Activated CD4-positive, alpha-beta T cell treated with anti-CD3 and anti-CD28 coated beads, Interleukin-2, amount 10 ng/mL, durations not matched to agents 24 days and 14 days (primary cell): ENCODE measurements at regions of chr14 and their contacts with region 1.

Region 1: DNA sequence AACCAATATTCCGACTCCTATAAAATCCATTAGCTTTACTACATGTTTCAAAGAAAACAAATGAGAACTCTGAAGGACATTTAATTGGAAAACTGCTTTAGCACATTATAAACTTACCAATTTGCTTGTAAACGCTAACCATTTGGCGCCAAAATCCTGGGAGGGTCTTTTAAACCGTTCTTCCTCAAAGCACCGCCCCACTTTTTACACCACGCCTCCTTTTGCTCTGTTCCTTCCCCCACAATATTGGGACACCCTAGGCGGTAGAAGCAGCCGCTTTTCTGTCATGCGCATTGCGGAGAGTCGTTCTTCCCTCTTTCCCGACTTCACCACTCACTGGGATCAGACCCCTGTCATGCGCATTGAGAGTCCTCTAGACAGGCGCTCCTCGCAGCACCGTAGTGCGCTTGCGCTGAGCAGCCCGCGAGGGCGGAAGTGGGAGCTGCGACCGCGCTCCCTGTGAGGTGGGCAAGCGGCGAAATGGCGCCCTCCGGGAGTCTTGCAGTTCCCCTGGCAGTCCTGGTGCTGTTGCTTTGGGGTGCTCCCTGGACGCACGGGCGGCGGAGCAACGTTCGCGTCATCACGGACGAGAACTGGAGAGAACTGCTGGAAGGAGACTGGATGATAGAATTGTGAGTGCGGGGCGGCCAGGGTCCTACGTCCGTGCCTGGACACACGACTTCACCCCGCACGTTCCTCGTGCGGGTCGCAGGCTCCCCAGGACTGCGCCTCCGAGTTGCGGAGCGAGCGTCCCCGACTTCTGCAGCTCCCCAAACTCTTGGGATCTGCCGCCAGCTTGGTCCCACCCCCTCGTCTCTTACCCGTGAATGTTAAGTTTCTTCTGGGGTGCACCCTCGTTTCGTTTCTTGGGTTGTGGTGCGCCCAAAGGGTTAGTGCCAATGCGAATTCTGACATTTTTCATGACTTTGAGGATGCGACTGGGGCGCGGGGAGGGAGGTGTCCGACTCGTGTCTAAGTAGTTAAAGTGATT is at the start of gene TMX1:
- DNase-seq: peak; percentile 97
- H3K4me3 Mint-ChIP-seq: no peak within 1 kb of the TSS
- H3K27ac Mint-ChIP-seq: no peak within 1 kb of the TSS
- H3K4me1 Mint-ChIP-seq: peaks cover 32% of the 10 kb centered on the region
- H3K27me3 Mint-ChIP-seq: no peaks in the 10 kb centered on the region
- total RNA-seq, gene TMX1: 53.1 and 53.6 TPM in 2 replicates

Region 2: DNA sequence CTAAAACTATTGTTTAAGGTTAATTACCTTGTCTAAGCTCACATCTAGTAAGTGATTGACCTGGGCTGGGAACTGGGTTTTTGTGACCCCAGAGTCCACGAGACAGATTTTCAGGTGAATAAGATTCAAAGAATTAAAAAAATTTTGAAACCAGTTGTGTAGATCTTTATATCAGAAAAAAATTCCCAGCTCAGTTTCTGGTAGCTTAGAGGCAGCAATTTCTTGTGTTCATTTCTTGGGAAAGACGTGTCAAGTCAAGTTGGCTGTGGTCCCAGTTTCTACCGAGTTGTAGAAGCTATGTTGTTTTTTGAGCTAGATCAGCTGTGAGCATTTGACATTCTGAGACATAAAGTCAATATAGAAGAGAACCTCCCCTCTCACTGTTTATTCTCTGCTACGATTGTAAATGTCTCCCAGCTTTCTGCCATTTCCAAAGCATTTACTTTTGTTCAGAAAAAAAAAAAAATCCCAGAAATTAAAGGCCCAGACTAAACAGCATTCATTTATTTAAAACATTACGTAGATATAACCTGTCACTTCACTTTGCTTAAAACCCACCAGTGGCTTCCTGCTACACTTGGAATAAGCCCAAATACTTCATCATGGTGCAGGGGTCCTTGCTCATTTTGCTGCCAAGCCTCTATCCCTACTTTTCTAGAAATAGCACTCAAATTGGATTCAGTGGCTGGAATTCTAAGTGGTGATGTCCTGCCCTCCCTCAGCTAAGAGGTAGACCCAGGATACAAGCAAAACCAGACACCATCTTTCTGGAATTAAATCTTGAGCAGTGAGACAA is 275.3 kb before region 1 on chr14:
- intact Hi-C with region 1: no loop called
- DNase-seq: no peak
- H3K4me3 Mint-ChIP-seq: no peak overlapping the region
- H3K27ac Mint-ChIP-seq: no peak overlapping the region
- H3K4me1 Mint-ChIP-seq: no peaks in the 10 kb centered on the region
- H3K27me3 Mint-ChIP-seq: peaks cover 14% of the 10 kb centered on the region

Region 3: GRCh38 chr14:51053157-51053556 is 187.0 kb before region 1 on chr14:
- intact Hi-C with region 1: no loop called
- DNase-seq: peak; percentile 4
- H3K4me3 Mint-ChIP-seq: no peak overlapping the region
- H3K27ac Mint-ChIP-seq: no peak overlapping the region
- H3K4me1 Mint-ChIP-seq: no peaks in the 10 kb centered on the region
- H3K27me3 Mint-ChIP-seq: no peaks in the 10 kb centered on the region

Region 4: GRCh38 chr14:51094901-51095853 is 144.9 kb before region 1 on chr14 and contains the start of gene TRIM9:
- intact Hi-C with region 1: loop called (anchors 1 kb)
- DNase-seq: peak; percentile 97
- H3K4me3 Mint-ChIP-seq: peak within 1 kb of the TSS; percentile 91
- H3K27ac Mint-ChIP-seq: peak within 1 kb of the TSS; percentile 51
- H3K4me1 Mint-ChIP-seq: peaks cover 15% of the 10 kb centered on the region
- H3K27me3 Mint-ChIP-seq: peaks cover 55% of the 10 kb centered on the region
- total RNA-seq, gene TRIM9: 0.47 and 0.52 TPM in 2 replicates

Region 5: GRCh38 chr14:51260225-51260624 is 20.1 kb after region 1 on chr14:
- intact Hi-C with region 1: loop called (anchors 1 kb)
- DNase-seq: no peak
- H3K4me3 Mint-ChIP-seq: peak overlapping the region; percentile 5
- H3K27ac Mint-ChIP-seq: peak overlapping the region; percentile 83
- H3K4me1 Mint-ChIP-seq: peaks cover 11% of the 10 kb centered on the region
- H3K27me3 Mint-ChIP-seq: no peaks in the 10 kb centered on the region

Region 6: DNA sequence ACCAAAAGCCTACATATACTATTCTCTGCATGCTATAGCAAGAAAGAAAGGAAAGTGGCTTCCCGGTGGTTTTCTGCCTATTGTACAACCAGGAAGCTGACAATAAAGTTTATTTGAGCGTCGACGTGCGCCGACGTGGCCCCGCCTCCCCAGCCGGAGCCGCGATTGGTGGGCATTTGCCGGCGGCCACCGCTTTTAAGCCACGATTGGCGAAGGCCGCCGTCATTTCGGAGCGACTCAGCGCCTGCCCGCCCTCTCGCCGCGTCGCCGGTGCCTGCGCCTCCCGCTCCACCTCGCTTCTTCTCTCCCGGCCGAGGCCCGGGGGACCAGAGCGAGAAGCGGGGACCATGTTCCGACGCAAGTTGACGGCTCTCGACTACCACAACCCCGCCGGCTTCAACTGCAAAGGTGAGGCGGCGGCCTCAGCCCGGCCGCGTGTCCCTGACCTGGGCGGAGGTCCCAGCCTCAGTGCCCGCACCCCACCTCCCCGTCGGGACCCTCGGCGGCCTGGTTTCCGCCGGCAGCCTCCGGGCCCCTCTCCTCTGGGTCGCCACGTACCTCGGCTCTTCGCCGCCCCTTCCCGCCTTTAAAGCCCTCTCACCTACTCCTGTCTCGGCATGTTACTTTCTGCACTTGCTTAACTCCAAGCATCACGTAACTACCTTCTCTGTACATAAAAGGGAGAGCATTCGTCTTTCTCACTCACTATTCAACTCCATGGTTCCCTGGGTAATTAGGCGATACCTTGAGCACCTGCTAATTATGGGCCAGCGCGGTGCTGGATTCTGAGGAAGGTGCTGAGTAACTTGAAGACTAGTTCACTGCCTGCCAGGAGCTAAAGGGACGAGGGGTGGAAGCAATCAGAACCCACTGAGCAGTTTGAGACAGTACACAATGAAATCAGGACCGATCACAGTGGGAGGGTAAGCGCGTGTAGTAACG is 749.5 kb after region 1 on chr14 and contains the start of gene RTRAF:
- intact Hi-C with region 1: loop called (anchors 1 kb)
- DNase-seq: peak; percentile 98
- H3K4me3 Mint-ChIP-seq: peak within 1 kb of the TSS; percentile 93
- H3K27ac Mint-ChIP-seq: peak within 1 kb of the TSS; percentile 96
- H3K4me1 Mint-ChIP-seq: peaks cover 18% of the 10 kb centered on the region
- H3K27me3 Mint-ChIP-seq: no peaks in the 10 kb centered on the region
- total RNA-seq, gene RTRAF: 226 and 229 TPM in 2 replicates